ENCODE measurements at regions of chr7 and their contacts with region 1.

Region 1: GRCh38 chr7:151876899-151877777 is at the start of gene PRKAG2:
- DNase-seq: peak; percentile 62 to 88 (median 75)
- ATAC-seq: peak; percentile 17 to 61 (median 55)
- H3K4me3 ChIP-seq: peak within 1 kb of the TSS; percentile 47 to 94 (median 80)
- H3K27ac ChIP-seq: peak within 1 kb of the TSS; percentile 88 to 97 (median 92)
- H3K4me1 ChIP-seq: peaks cover 0 to 33% (median 16%) of the 10 kb centered on the region in 12 donors
- H3K27me3 ChIP-seq: peaks cover 0 to 3% (median 0%) of the 10 kb centered on the region in 9 donors
- CTCF ChIP-seq: peak in 2 of 12 donors; percentile 9 to 29
- POLR2A ChIP-seq: peak in 1 of 2 donors; percentile 40
- total RNA-seq, gene PRKAG2: 50.2 to 179 (median 108) TPM

Region 2: GRCh38 chr7:151822541-151823181 is 54.5 kb before region 1 on chr7:
- intact Hi-C with region 1: no loop called
- DNase-seq: peak in 1 of 5 donors; percentile 26
- ATAC-seq: peak in 2 of 4 donors; percentile 25 to 44
- H3K4me3 ChIP-seq: no peak overlapping the region
- H3K27ac ChIP-seq: no peak overlapping the region
- H3K4me1 ChIP-seq: peaks cover 0 to 40% (median 15%) of the 10 kb centered on the region in 12 donors
- H3K27me3 ChIP-seq: no peaks in the 10 kb centered on the region
- CTCF ChIP-seq: no peak
- POLR2A ChIP-seq: no peak

Region 3: DNA sequence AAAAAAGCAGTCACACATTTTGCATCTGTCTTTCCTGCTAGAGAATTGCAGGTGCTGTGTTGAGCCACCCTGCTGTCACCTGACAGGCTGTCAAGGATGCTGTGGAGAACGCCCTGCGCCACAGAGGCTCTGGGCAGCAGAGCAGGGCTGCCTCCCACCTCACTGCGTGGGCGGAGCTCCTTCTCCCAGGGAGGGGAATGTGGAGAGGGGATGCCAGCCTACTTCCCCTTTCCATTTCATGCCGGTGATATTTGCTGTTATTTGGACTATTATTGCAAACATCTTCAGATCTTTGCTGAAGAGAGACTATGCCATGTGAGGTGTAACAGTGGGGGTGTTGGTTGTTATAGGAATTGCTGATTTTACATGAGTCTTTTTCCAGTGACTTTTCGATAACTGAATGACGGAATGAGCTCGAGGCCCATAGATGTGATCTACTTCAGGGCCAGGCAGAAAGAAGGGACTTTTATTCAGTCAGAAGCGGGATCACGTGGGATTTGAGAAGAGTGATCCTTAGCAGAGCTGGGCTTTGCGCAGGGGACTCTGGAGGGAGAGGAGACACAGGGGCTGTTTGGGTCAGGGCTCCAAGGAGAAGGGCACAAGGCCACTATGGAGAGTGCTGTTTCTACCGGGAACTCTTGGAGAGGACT is 13.3 kb after region 1 on chr7:
- intact Hi-C with region 1: no loop called
- DNase-seq: no peak
- ATAC-seq: no peak
- H3K4me3 ChIP-seq: no peak overlapping the region
- H3K27ac ChIP-seq: no peak overlapping the region
- H3K4me1 ChIP-seq: peaks cover 0 to 8% (median 0%) of the 10 kb centered on the region in 12 donors
- H3K27me3 ChIP-seq: peaks cover 0 to 27% (median 0%) of the 10 kb centered on the region in 9 donors
- CTCF ChIP-seq: no peak
- POLR2A ChIP-seq: no peak

Region 4: GRCh38 chr7:151925446-151926335 is 48.6 kb after region 1 on chr7:
- intact Hi-C with region 1: loop called in 2 of 10 experiments (anchors 5 kb)
- DNase-seq: peak; percentile 34 to 82 (median 61)
- ATAC-seq: peak; percentile 33 to 77 (median 70)
- H3K4me3 ChIP-seq: peak overlapping the region in 2 of 12 donors; percentile 19 to 23
- H3K27ac ChIP-seq: peak overlapping the region in 9 of 12 donors; percentile 4 to 85 (median 42)
- H3K4me1 ChIP-seq: peaks cover 0 to 55% (median 4%) of the 10 kb centered on the region in 12 donors
- H3K27me3 ChIP-seq: no peaks in the 10 kb centered on the region
- CTCF ChIP-seq: no peak
- POLR2A ChIP-seq: no peak

Region 5: DNA sequence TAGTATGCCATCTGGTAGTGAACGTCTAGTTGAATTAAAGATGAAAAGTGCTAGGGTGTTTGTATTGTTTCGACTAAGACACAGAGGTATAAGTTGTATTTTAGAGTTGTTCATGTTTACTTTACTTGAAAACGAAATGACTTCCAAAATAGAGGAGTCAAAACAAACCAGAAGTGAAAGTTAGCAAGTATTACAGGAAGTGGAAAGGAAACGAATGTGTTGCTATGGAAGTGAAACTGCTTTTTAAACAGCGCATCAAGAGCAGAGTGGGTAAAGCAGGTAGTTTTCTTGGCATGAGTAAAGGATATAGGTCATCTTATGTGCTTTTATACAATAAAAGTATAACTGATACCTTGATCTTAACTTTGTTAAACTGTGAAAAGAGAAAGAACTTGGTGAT is 59.1 kb after region 1 on chr7:
- intact Hi-C with region 1: loop called in 1 of 10 experiments (anchors 5 kb)
- DNase-seq: no peak
- ATAC-seq: peak in 1 of 4 donors; percentile 35
- H3K4me3 ChIP-seq: no peak overlapping the region
- H3K27ac ChIP-seq: peak overlapping the region in 1 of 12 donors; percentile 89
- H3K4me1 ChIP-seq: peaks cover 0 to 38% (median 0%) of the 10 kb centered on the region in 12 donors
- H3K27me3 ChIP-seq: peaks cover 0 to 5% (median 0%) of the 10 kb centered on the region in 9 donors
- CTCF ChIP-seq: no peak
- POLR2A ChIP-seq: no peak

Measured in heart left ventricle (tissue), 16 donors.